Caco-2 (cell line): ENCODE measurements at regions of chr17 and their contacts with region 1.

Region 1: GRCh38 chr17:40854159-40854814 is 12.7 kb downstream of the KRT12 start:
- DNase-seq: no peak
- H3K4me3 ChIP-seq: no peak overlapping the region
- H3K4me3 Mint-ChIP-seq: no peak overlapping the region
- H3K27ac Mint-ChIP-seq: no peak overlapping the region
- H3K4me1 ChIP-seq: peaks cover 13% of the 10 kb centered on the region
- H3K4me1 Mint-ChIP-seq: peaks cover 19% of the 10 kb centered on the region
- H3K27me3 ChIP-seq: no peaks in the 10 kb centered on the region
- H3K27me3 Mint-ChIP-seq: no peaks in the 10 kb centered on the region
- CTCF ChIP-seq: no peak

Region 2: GRCh38 chr17:40803617-40804082 is 50.6 kb before region 1 on chr17:
- CTCF ChIA-PET with region 1: no interaction called
- POLR2A ChIA-PET with region 1: no interaction called
- intact Hi-C with region 1: loop called (anchors 5 kb)
- DNase-seq: peak; percentile 87 to 91
- H3K4me3 ChIP-seq: no peak overlapping the region
- H3K4me3 Mint-ChIP-seq: no peak overlapping the region
- H3K27ac Mint-ChIP-seq: no peak overlapping the region
- H3K4me1 ChIP-seq: 0 out of 2 replicates have a peak, but pooled peaks cover 5% of the 10 kb centered on the region
- H3K4me1 Mint-ChIP-seq: no peaks in the 10 kb centered on the region
- H3K27me3 ChIP-seq: no peaks in the 10 kb centered on the region
- H3K27me3 Mint-ChIP-seq: peaks cover 4% of the 10 kb centered on the region
- CTCF ChIP-seq: peak; percentile 96

Region 3: GRCh38 chr17:40884708-40885512 is 30.6 kb after region 1 on chr17 and contains the start of gene KRT20:
- CTCF ChIA-PET with region 1: no interaction called
- POLR2A ChIA-PET with region 1: no interaction called
- intact Hi-C with region 1: no loop called
- DNase-seq: no peak
- H3K4me3 ChIP-seq: no peak within 1 kb of the TSS
- H3K4me3 Mint-ChIP-seq: no peak within 1 kb of the TSS
- H3K27ac Mint-ChIP-seq: no peak within 1 kb of the TSS
- H3K4me1 ChIP-seq: peaks cover 9% of the 10 kb centered on the region; the same call in 1 of the 2 replicates
- H3K4me1 Mint-ChIP-seq: peaks cover 12% of the 10 kb centered on the region
- H3K27me3 ChIP-seq: no peaks in the 10 kb centered on the region
- H3K27me3 Mint-ChIP-seq: no peaks in the 10 kb centered on the region
- CTCF ChIP-seq: peak in 1 of 2 experiments; percentile 32
- total RNA-seq, gene KRT20: 0.53 and 1.0 TPM in 2 replicates

Region 4: GRCh38 chr17:40903129-40904065 is 49.1 kb after region 1 on chr17:
- CTCF ChIA-PET with region 1: interaction called, 5 read pairs
- POLR2A ChIA-PET with region 1: no interaction called
- intact Hi-C with region 1: loop called (anchors 1 kb)
- DNase-seq: peak; percentile 69 to 70
- H3K4me3 ChIP-seq: no peak overlapping the region
- H3K4me3 Mint-ChIP-seq: peak overlapping the region; percentile 65
- H3K27ac Mint-ChIP-seq: peak overlapping the region; percentile 95
- H3K4me1 ChIP-seq: peaks cover 51% of the 10 kb centered on the region
- H3K4me1 Mint-ChIP-seq: peaks cover 44% of the 10 kb centered on the region
- H3K27me3 ChIP-seq: no peaks in the 10 kb centered on the region
- H3K27me3 Mint-ChIP-seq: no peaks in the 10 kb centered on the region
- CTCF ChIP-seq: no peak

Region 5: DNA sequence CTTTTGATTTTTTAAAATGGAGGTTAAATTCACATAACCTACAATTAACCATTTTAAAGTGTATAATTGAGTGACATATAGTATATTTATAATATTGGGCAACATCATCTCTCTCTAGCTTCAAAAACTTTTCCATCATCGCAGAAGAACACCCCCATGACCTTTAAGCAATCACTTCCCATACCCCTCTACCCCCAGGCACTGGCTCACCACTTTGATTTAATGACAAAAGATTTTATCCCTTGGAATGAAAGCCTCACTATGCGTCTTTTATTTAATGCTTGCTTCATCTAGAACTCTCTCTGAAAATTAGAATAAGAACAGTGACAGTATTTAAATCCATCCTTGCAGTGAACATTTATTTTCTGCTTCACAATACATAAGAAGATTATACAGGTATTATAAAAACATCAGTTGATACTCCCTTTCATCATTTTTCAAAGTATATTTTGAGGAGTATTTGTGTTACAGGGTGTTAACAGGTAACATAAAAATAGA is 183.6 kb after region 1 on chr17:
- CTCF ChIA-PET with region 1: no interaction called
- POLR2A ChIA-PET with region 1: no interaction called
- intact Hi-C with region 1: no loop called
- DNase-seq: no peak
- H3K4me3 ChIP-seq: no peak overlapping the region
- H3K4me3 Mint-ChIP-seq: no peak overlapping the region
- H3K27ac Mint-ChIP-seq: no peak overlapping the region
- H3K4me1 ChIP-seq: 0 out of 2 replicates have a peak, but pooled peaks cover 3% of the 10 kb centered on the region
- H3K4me1 Mint-ChIP-seq: peaks cover 8% of the 10 kb centered on the region
- H3K27me3 ChIP-seq: no peaks in the 10 kb centered on the region
- H3K27me3 Mint-ChIP-seq: no peaks in the 10 kb centered on the region
- CTCF ChIP-seq: no peak